GM12878 (cell line): ENCODE measurements at regions of chr11 and their contacts with region 1.

Region 1: GRCh38 chr11:96389720-96390487 is at the starts of genes CCDC82 and JRKL:
- DNase-seq: peak; percentile 78
- ATAC-seq: peak; percentile 94
- H3K4me3 ChIP-seq: peak within 1 kb of the TSS; percentile 90
- H3K27ac ChIP-seq: peak within 1 kb of the TSS; percentile 78
- H3K4me1 ChIP-seq: no peaks in the 10 kb centered on the region
- H3K27me3 ChIP-seq: no peaks in the 10 kb centered on the region
- CTCF ChIP-seq: no peak
- EP300 ChIP-seq: no peak
- POLR2A ChIP-seq: peak; percentile 92
- RAD21 ChIP-seq: no peak
- polyA plus RNA-seq, gene CCDC82: 24.5 to 24.7 TPM
- polyA plus RNA-seq, gene JRKL: 4.6 to 4.8 TPM

Region 2: DNA sequence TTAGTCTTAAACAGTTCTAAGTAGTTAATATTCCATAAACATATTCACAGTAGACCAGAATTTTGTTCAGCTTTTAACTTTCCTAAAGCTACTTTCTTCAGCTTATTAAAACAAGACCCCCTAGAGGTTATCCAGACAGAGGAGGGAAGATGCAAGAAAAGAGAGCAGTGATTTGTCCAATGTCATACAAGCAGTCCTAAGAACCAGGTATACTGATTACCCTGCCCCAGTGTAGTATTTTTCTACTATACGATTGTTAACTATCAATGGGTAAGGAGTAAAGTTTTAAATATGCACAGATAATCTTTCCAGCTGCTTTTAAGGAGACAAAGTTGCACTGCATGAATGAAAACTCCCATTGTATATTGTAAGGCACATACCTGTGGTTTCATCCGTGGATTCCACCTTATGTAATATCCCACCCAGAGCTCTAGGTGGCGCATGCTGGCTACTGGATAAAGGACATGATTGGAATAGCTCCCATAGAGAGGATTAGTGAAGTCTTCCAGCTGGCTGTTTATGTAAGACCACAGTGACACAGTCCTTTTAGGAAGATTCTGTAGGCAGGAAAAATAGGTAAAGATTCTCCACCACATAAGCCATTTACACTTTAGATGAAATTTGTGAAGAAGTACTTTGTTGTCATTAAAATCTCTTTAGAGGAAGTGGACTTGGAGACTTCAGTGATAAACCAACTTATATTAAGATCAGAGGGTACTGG is 554.0 kb before region 1 on chr11:
- CTCF ChIA-PET with region 1: interaction called, 101 read pairs
- POLR2A ChIA-PET with region 1: interaction called, 7 read pairs
- RAD21 ChIA-PET with region 1: interaction called, 39 read pairs
- SMC1A ChIA-PET with region 1: interaction called, 17 read pairs
- in situ Hi-C with region 1: loop called (anchors 5 kb)
- intact Hi-C with region 1: no loop called
- DNase-seq: peak; percentile 13
- ATAC-seq: peak; percentile 97
- H3K4me3 ChIP-seq: no peak overlapping the region
- H3K27ac ChIP-seq: no peak overlapping the region
- H3K4me1 ChIP-seq: no peaks in the 10 kb centered on the region
- H3K27me3 ChIP-seq: no peaks in the 10 kb centered on the region
- CTCF ChIP-seq: peak; percentile 86 to 94 (median 88)
- EP300 ChIP-seq: no peak
- POLR2A ChIP-seq: no peak
- RAD21 ChIP-seq: peak; percentile 96

Region 3: GRCh38 chr11:96054870-96055705 is 334.8 kb before region 1 on chr11:
- CTCF ChIA-PET with region 1: interaction called, 36 read pairs
- POLR2A ChIA-PET with region 1: interaction called, 3 read pairs
- RAD21 ChIA-PET with region 1: interaction called, 11 read pairs
- SMC1A ChIA-PET with region 1: interaction called, 24 read pairs
- in situ Hi-C with region 1: loop called (anchors 5 kb)
- intact Hi-C with region 1: loop called (anchors 1 kb)
- DNase-seq: no peak
- ATAC-seq: no peak
- H3K4me3 ChIP-seq: no peak overlapping the region
- H3K27ac ChIP-seq: no peak overlapping the region
- H3K4me1 ChIP-seq: peaks cover 27% of the 10 kb centered on the region
- H3K27me3 ChIP-seq: no peaks in the 10 kb centered on the region
- CTCF ChIP-seq: peak; percentile 46 to 58 (median 48)
- EP300 ChIP-seq: no peak
- POLR2A ChIP-seq: no peak
- RAD21 ChIP-seq: peak; percentile 63

Region 4: DNA sequence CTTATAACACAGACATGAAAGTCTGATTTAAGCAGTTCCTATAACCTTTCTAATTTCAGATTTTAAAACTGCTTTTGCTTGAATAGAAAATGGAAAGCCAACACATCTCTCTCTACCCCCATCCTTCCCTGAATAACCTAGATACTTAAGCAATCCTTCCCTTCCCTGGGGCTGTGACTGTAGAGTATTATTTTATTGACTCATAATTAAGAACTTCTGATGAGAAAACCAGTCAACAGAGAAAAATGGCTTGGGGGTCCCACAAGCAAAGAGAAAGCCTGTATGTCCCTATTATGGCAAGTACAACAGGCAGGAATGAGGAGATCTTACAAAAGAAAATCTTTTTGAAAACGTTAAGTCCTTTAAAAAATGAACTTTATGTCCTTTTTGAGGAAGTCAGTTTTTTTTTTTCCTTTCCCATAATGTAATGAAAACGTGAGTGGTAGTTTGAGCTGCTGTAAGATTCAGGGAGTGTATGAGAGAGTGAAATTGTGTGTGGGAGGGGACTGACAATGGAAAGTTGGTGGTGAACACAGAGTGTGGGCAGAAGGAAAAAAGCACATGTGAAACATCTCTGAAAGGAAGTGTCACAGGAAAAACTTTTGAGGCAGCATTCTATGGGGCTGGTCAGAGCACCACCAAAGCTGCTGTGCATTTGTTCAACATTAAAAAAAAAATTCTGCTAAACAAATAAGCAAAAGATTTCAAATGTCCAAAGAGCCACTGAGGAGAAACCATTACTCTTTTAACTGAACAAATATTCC is 201.5 kb before region 1 on chr11:
- CTCF ChIA-PET with region 1: interaction called, 5 read pairs
- POLR2A ChIA-PET with region 1: no interaction called
- RAD21 ChIA-PET with region 1: interaction called, 3 read pairs
- SMC1A ChIA-PET with region 1: interaction called, 4 read pairs
- in situ Hi-C with region 1: no loop called
- intact Hi-C with region 1: loop called (anchors 5 kb)
- DNase-seq: peak; percentile 75
- ATAC-seq: peak; percentile 67
- H3K4me3 ChIP-seq: no peak overlapping the region
- H3K27ac ChIP-seq: peak overlapping the region; percentile 93
- H3K4me1 ChIP-seq: peaks cover 76% of the 10 kb centered on the region
- H3K27me3 ChIP-seq: no peaks in the 10 kb centered on the region
- CTCF ChIP-seq: no peak
- EP300 ChIP-seq: peak; percentile 23 to 78; a peak in 3 of 4 replicates
- POLR2A ChIP-seq: no peak
- RAD21 ChIP-seq: no peak

Region 5: DNA sequence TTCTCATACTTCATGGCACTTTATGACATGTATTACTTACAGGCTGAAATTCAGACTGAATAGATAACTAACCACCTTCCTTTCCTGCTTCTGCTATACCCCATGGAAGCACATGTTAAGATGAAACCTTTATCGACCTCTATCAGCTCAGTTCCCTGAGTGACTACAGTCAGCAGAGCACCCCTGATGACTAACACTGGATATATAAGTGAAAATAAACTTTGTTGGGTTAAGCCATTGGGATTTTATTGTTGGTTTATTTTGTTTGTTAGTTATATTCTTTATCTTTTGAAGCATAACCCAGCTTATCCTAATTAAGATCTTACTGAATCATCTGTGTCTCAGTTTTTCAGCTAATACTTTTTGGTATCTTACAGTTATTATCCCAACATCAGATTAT is 23.9 kb before region 1 on chr11:
- CTCF ChIA-PET with region 1: interaction called, 7 read pairs
- POLR2A ChIA-PET with region 1: interaction called, 3 read pairs
- RAD21 ChIA-PET with region 1: interaction called, 5 read pairs
- SMC1A ChIA-PET with region 1: interaction called, 12 read pairs
- in situ Hi-C with region 1: no loop called
- intact Hi-C with region 1: no loop called
- DNase-seq: no peak
- ATAC-seq: no peak
- H3K4me3 ChIP-seq: no peak overlapping the region
- H3K27ac ChIP-seq: no peak overlapping the region
- H3K4me1 ChIP-seq: no peaks in the 10 kb centered on the region
- H3K27me3 ChIP-seq: no peaks in the 10 kb centered on the region
- CTCF ChIP-seq: no peak
- EP300 ChIP-seq: no peak
- POLR2A ChIP-seq: no peak
- RAD21 ChIP-seq: no peak

Region 6: DNA sequence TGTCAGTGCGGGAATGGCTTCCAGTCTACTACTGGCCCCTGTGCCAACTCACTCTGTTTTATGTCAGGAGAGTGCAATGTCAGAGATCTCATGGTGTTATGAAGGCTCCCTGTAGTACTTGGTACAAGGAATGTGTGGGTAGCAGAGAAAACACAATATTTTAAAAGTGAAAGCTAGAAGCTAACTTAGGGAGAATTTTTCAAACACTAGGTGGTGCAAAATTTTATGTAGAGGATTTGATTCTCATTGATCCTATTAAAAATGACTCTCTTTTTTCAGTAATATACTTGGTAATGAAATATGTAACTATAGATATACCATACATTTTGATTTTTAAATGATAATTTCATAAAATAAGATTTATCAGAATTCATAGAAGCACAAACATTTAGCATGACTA is 134.6 kb after region 1 on chr11:
- CTCF ChIA-PET with region 1: no interaction called
- POLR2A ChIA-PET with region 1: no interaction called
- RAD21 ChIA-PET with region 1: no interaction called
- SMC1A ChIA-PET with region 1: no interaction called
- in situ Hi-C with region 1: no loop called
- intact Hi-C with region 1: no loop called
- DNase-seq: no peak
- ATAC-seq: no peak
- H3K4me3 ChIP-seq: no peak overlapping the region
- H3K27ac ChIP-seq: no peak overlapping the region
- H3K4me1 ChIP-seq: no peaks in the 10 kb centered on the region
- H3K27me3 ChIP-seq: peaks cover 0 to 2% of the 10 kb centered on the region in 2 experiments; a peak in 1 of 4 replicates
- CTCF ChIP-seq: peak in 1 of 3 experiments; percentile 16; a peak in 1 of 6 replicates
- EP300 ChIP-seq: no peak
- POLR2A ChIP-seq: no peak
- RAD21 ChIP-seq: no peak